ENCODE measurements at regions of chr1 and their contacts with region 1.

Region 1: GRCh38 chr1:41573785-41574713 is 89.6 kb upstream of the EDN2 start:
- DNase-seq: peak; percentile 77 to 87 (median 82)
- ATAC-seq: peak; percentile 62 to 95 (median 92)
- H3K4me3 ChIP-seq: no peak overlapping the region
- H3K27ac ChIP-seq: no peak overlapping the region
- H3K4me1 ChIP-seq: peaks cover 0 to 10% (median 3%) of the 10 kb centered on the region in 12 donors
- H3K27me3 ChIP-seq: no peaks in the 10 kb centered on the region
- CTCF ChIP-seq: peak; percentile 83 to 93 (median 88)
- POLR2A ChIP-seq: no peak

Region 2: GRCh38 chr1:41773144-41773591 is 199.1 kb after region 1 on chr1:
- intact Hi-C with region 1: loop called in 3 of 10 experiments (anchors 5 to 10 kb)
- DNase-seq: no peak
- ATAC-seq: peak in 1 of 4 donors; percentile 25
- H3K4me3 ChIP-seq: no peak overlapping the region
- H3K27ac ChIP-seq: no peak overlapping the region
- H3K4me1 ChIP-seq: peaks cover 0 to 39% (median 7%) of the 10 kb centered on the region in 12 donors
- H3K27me3 ChIP-seq: no peaks in the 10 kb centered on the region
- CTCF ChIP-seq: no peak
- POLR2A ChIP-seq: no peak

Region 3: GRCh38 chr1:41795205-41795762 is 221.2 kb after region 1 on chr1:
- intact Hi-C with region 1: loop called in 9 of 10 experiments (anchors 2 to 10 kb)
- DNase-seq: no peak
- ATAC-seq: no peak
- H3K4me3 ChIP-seq: no peak overlapping the region
- H3K27ac ChIP-seq: no peak overlapping the region
- H3K4me1 ChIP-seq: peaks cover 0 to 35% (median 0%) of the 10 kb centered on the region in 12 donors
- H3K27me3 ChIP-seq: no peaks in the 10 kb centered on the region
- CTCF ChIP-seq: peak in 10 of 12 donors; percentile 13 to 55 (median 34)
- POLR2A ChIP-seq: no peak

Region 4: DNA sequence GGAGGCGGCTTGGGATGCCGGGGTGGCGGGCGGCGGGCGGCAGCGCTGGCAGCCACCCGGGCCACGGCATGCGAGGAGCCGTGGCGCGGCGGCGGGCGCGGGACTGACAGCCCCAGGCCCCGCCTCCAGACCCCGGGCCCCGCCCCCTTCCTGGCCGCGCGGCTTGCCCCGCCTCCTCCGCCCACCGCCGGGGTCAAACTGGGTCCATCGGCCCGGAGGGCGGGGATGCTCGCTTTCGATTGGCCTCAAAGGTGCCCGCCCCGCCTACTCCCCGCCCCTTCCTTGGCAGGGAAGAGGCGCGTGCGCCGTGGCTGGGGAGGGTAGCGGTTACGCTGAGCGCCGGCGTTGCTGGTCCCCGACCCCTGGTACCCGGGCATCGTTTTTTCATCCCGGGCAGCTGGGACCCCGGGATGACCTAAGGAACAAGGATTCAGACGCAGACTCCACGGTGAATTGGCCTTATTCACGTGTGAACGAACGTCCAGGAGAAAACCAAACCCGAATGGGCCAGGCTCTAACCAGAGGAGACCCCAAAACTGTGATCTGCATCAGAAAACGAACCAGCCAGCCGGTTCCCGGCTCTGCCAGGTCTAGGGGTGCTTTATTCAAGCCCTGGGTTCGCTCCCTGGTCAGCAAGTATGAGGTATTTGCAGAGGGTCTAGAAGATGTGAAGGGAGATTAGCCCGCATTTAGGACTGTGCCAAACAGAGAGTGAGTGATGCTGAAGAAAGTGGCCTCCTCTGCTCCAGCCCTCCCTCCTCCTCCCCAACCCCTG is 462.0 kb after region 1 on chr1:
- intact Hi-C with region 1: loop called in 5 of 10 experiments (anchors 5 to 10 kb)
- DNase-seq: peak; percentile 97 to 99 (median 98)
- ATAC-seq: peak; percentile 97 to 99 (median 98)
- H3K4me3 ChIP-seq: peak overlapping the region; percentile 11 to 100 (median 90)
- H3K27ac ChIP-seq: peak overlapping the region; percentile 50 to 88 (median 78)
- H3K4me1 ChIP-seq: peaks cover 0 to 20% (median 9%) of the 10 kb centered on the region in 12 donors
- H3K27me3 ChIP-seq: no peaks in the 10 kb centered on the region
- CTCF ChIP-seq: peak in 1 of 12 donors; percentile 1
- POLR2A ChIP-seq: peak in 1 of 2 donors; percentile 37

Region 5: GRCh38 chr1:42173155-42173933 is 599.3 kb after region 1 on chr1:
- intact Hi-C with region 1: loop called in 9 of 10 experiments (anchors 5 to 10 kb)
- DNase-seq: peak; percentile 58 to 80 (median 70)
- ATAC-seq: peak; percentile 42 to 63 (median 54)
- H3K4me3 ChIP-seq: no peak overlapping the region
- H3K27ac ChIP-seq: peak overlapping the region; percentile 63 to 95 (median 86)
- H3K4me1 ChIP-seq: peaks cover 8 to 48% (median 37%) of the 10 kb centered on the region in 12 donors
- H3K27me3 ChIP-seq: no peaks in the 10 kb centered on the region
- CTCF ChIP-seq: peak; percentile 91 to 99 (median 98)
- POLR2A ChIP-seq: no peak